Common myeloid progenitor, CD34-positive (primary cell): ENCODE measurements at regions of chr17 and their contacts with region 1.

Region 1: GRCh38 chr17:63478791-63479494 is 2.1 kb downstream of the ACE start:
- DNase-seq: peak; percentile 84 to 91 (median 89)
- H3K4me3 ChIP-seq: peak overlapping the region in 1 of 7 experiments; percentile 28
- H3K27ac ChIP-seq: no peak overlapping the region
- H3K4me1 ChIP-seq: peaks cover 0 to 30% (median 29%) of the 10 kb centered on the region in 4 experiments
- H3K27me3 ChIP-seq: peaks cover 0 to 10% (median 0%) of the 10 kb centered on the region in 5 experiments

Region 2: DNA sequence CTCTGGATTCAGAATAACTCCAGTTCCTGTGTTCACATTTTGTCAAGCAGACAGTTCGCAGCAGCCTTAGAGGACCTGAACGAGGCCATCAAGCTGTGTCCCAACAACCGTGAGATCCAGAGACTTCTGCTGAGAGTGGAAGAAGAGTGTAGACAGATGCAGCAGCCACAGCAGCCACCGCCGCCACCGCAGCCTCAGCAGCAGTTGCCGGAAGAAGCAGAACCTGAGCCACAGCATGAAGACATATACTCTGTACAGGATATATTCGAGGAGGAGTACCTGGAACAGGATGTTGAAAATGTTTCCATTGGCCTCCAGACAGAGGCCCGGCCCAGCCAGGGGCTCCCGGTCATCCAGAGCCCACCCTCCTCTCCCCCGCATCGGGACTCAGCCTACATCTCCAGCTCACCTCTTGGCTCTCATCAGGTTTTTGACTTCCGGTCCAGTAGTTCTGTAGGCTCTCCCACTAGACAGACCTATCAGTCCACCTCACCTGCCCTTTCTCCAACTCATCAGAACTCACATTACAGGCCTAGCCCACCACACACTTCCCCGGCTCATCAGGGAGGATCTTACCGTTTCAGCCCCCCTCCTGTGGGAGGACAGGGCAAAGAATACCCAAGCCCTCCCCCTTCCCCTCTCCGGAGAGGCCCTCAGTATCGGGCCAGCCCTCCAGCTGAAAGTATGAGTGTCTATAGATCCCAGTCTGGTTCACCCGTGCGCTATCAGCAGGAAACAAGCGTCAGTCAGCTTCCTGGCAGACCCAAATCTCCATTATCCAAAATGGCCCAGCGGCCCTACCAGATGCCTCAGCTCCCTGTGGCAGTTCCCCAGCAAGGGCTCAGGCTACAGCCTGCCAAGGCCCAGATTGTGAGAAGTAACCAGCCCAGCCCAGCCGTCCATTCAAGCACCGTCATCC is 58.7 kb before region 1 on chr17:
- CTCF ChIA-PET with region 1: interaction called, 562 read pairs
- POLR2A ChIA-PET with region 1: interaction called, 6 read pairs
- DNase-seq: peak; percentile 98 to 100 (median 99)
- H3K4me3 ChIP-seq: peak overlapping the region in 4 of 7 experiments; percentile 7 to 42 (median 24)
- H3K27ac ChIP-seq: peak overlapping the region; percentile 25 to 74
- H3K4me1 ChIP-seq: peaks cover 12 to 65% (median 56%) of the 10 kb centered on the region in 4 experiments
- H3K27me3 ChIP-seq: no peaks in the 10 kb centered on the region

Region 3: DNA sequence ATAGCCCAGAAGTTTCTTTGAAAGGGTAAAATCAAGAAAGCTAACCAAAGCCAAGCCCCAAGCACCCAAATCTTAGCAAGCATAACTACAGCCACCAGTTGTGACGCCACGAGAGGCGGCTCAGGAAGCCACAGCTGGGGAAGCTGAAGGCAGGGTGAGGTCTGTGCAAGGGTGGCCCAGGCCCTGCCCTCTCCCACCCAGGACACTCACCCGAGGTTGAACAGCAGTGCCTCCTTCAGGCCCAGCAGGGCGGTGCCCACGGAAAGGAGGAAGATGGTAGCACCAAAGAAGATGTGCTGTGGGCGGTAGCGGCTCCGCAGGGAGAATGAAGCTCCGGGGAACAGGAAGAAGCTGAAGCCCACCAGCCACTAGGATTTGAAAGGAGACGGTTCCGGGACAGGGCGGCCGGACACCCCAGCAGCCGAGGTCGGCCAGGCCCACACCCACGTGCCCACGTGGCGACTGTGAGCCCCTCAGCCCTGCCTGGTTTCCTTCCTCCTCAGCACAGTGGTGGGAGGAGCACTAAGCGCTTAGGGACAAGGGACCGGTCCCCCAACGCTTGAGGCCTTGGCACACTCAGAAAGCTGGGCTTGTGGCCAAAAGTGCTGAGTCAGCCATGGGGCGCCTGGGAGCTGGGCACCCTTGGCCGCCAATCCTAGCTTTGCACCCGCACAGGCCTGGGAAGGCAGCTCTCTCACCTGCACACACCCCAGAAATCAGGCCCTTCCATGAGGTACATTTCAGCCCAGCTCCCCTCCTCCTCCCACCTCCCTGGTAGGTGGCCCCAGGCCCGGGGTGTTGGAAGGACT is 43.9 kb before region 1 on chr17:
- CTCF ChIA-PET with region 1: interaction called, 562 read pairs
- POLR2A ChIA-PET with region 1: interaction called, 23 read pairs
- DNase-seq: peak; percentile 73 to 89 (median 86)
- H3K4me3 ChIP-seq: peak overlapping the region in 5 of 7 experiments; percentile 4 to 54 (median 43)
- H3K27ac ChIP-seq: no peak overlapping the region
- H3K4me1 ChIP-seq: peaks cover 10 to 88% (median 86%) of the 10 kb centered on the region in 4 experiments
- H3K27me3 ChIP-seq: no peaks in the 10 kb centered on the region

Region 4: DNA sequence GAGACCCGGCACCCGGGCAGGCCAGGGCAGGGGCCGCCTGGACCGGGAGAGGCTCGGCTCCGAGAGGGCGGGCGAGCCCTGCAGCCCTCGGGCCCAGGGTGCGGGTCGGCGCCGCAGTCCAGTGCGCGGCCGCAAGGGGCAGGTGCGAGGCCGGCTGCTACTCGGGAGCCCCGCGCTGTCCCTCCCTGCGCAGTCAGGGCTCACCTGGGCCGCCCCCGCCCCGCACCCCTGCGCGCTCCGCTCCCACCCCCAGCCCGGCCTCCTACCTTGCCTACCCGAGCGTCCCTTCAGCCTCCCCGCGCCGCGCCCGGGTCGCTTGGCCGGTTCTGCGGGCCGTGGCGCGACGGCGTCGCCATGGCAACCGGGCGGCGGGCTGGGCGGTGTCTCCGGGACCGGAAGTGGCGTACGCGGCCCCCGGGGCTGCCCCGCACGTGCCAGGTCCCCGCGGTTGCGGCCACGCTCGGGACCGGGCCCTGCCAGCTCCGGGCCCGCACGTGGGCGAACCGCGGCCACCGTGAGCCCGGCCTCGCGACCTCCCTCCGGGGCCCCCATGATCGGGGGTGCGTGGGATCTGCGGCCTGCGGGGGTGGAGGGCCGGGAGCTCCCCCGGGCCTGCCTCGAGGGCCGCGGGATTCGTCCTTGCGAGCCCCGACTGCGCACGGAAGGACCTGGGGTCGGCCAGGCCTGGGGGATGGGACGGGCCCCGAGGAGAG is 32.8 kb before region 1 on chr17 and contains the start of gene CYB561:
- CTCF ChIA-PET with region 1: interaction called, 562 read pairs
- POLR2A ChIA-PET with region 1: interaction called, 28 read pairs
- DNase-seq: peak; percentile 62 to 78 (median 75)
- H3K4me3 ChIP-seq: peak within 1 kb of the TSS; percentile 27 to 74 (median 63)
- H3K27ac ChIP-seq: peak within 1 kb of the TSS; percentile 74 to 88
- H3K4me1 ChIP-seq: peaks cover 0 to 81% (median 60%) of the 10 kb centered on the region in 4 experiments
- H3K27me3 ChIP-seq: no peaks in the 10 kb centered on the region

Region 5: GRCh38 chr17:63589646-63590045 is 110.7 kb after region 1 on chr17:
- CTCF ChIA-PET with region 1: no interaction called
- POLR2A ChIA-PET with region 1: no interaction called
- DNase-seq: no peak
- H3K4me3 ChIP-seq: no peak overlapping the region
- H3K27ac ChIP-seq: no peak overlapping the region
- H3K4me1 ChIP-seq: peaks cover 0 to 8% (median 0%) of the 10 kb centered on the region in 4 experiments
- H3K27me3 ChIP-seq: no peaks in the 10 kb centered on the region

Region 6: GRCh38 chr17:63611354-63611753 is 132.4 kb after region 1 on chr17:
- CTCF ChIA-PET with region 1: interaction called, 28 read pairs
- POLR2A ChIA-PET with region 1: no interaction called
- DNase-seq: no peak
- H3K4me3 ChIP-seq: no peak overlapping the region
- H3K27ac ChIP-seq: no peak overlapping the region
- H3K4me1 ChIP-seq: peaks cover 0 to 1% (median 0%) of the 10 kb centered on the region in 4 experiments
- H3K27me3 ChIP-seq: no peaks in the 10 kb centered on the region